CD8-positive, alpha-beta T cell (primary cell): ENCODE measurements at regions of chr5 and their contacts with region 1.

Region 1: DNA sequence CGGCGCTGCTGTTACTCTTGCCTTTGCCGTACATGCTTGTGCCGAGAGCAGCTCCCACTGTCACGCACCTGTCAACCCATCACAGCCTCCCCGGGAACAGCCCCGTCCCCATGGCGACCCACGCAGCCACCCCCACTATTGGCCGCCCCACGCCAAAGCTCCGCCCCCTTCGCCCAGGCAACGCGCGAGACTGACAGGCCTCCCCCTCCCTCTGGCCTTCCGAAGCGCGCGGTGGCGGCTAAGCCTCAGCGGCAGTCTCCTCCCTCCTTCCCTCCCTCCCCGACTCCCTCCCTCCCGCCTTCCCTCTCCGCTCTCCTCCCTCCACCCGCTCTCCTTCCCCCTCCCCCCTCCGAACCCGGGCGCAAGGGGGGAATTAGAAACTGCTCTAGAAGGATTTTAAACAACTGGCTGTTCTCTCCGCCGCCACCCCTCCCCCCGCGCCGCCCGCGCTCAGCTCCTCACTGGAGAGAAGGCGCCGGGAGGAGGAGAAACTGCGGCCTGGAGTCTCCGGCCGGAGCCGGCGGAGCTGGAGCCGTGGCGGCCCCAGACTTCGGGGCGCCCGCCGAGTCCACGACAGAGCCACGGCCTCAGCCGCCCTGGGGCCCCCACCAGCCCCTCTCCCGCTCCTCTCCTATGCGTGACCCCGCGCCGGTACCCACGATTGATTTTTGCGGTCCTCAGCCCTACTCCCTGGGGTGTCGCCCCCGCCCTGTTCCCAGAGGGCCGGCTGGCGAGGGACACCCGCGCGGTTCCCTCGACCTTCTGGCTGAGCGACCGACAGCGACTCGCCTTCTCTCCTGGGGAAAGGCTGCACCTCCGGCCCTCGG is at the start of gene SSBP2:
- DNase-seq: peak; percentile 99 to 100 (median 99)
- ATAC-seq: peak; percentile 90
- H3K4me3 ChIP-seq: peak within 1 kb of the TSS; percentile 75 to 76
- H3K4me3 Mint-ChIP-seq: peak within 1 kb of the TSS; percentile 97
- H3K27ac ChIP-seq: peak within 1 kb of the TSS; percentile 76 to 84
- H3K27ac Mint-ChIP-seq: peak within 1 kb of the TSS; percentile 94
- H3K4me1 ChIP-seq: peaks cover 17% of the 10 kb centered on the region
- H3K4me1 Mint-ChIP-seq: peaks cover 33% of the 10 kb centered on the region
- H3K27me3 ChIP-seq: no peaks in the 10 kb centered on the region
- H3K27me3 Mint-ChIP-seq: no peaks in the 10 kb centered on the region
- CTCF ChIP-seq: no peak
- total RNA-seq, gene SSBP2: 21.7 to 22.5 TPM

Region 2: GRCh38 chr5:81425569-81425968 is 325.7 kb before region 1 on chr5:
- CTCF ChIA-PET with region 1: no interaction called
- POLR2A ChIA-PET with region 1: interaction called, 5 read pairs
- intact Hi-C with region 1: loop called in 1 of 2 experiments (anchors 5 kb)
- DNase-seq: peak in 2 of 9 experiments; percentile 42 to 57
- ATAC-seq: peak; percentile 49
- H3K4me3 ChIP-seq: no peak overlapping the region
- H3K4me3 Mint-ChIP-seq: no peak overlapping the region
- H3K27ac ChIP-seq: no peak overlapping the region
- H3K27ac Mint-ChIP-seq: no peak overlapping the region
- H3K4me1 ChIP-seq: no peaks in the 10 kb centered on the region
- H3K4me1 Mint-ChIP-seq: peaks cover 7% of the 10 kb centered on the region
- H3K27me3 ChIP-seq: no peaks in the 10 kb centered on the region
- H3K27me3 Mint-ChIP-seq: no peaks in the 10 kb centered on the region
- CTCF ChIP-seq: peak; percentile 71

Region 3: GRCh38 chr5:81513982-81514381 is 237.2 kb before region 1 on chr5:
- CTCF ChIA-PET with region 1: interaction called, 3 read pairs
- POLR2A ChIA-PET with region 1: no interaction called
- intact Hi-C with region 1: loop called in 1 of 2 experiments (anchors 1 kb)
- DNase-seq: peak in 1 of 9 experiments; percentile 35
- ATAC-seq: peak; percentile 42
- H3K4me3 ChIP-seq: no peak overlapping the region
- H3K4me3 Mint-ChIP-seq: no peak overlapping the region
- H3K27ac ChIP-seq: no peak overlapping the region
- H3K27ac Mint-ChIP-seq: no peak overlapping the region
- H3K4me1 ChIP-seq: no peaks in the 10 kb centered on the region
- H3K4me1 Mint-ChIP-seq: no peaks in the 10 kb centered on the region
- H3K27me3 ChIP-seq: no peaks in the 10 kb centered on the region
- H3K27me3 Mint-ChIP-seq: no peaks in the 10 kb centered on the region
- CTCF ChIP-seq: peak; percentile 51

Region 4: GRCh38 chr5:81779125-81779915 is 28.1 kb after region 1 on chr5:
- CTCF ChIA-PET with region 1: no interaction called
- POLR2A ChIA-PET with region 1: interaction called, 32 read pairs
- intact Hi-C with region 1: loop called in 1 of 2 experiments (anchors 1 kb)
- DNase-seq: peak in 8 of 9 experiments; percentile 13 to 74 (median 42)
- ATAC-seq: peak; percentile 74
- H3K4me3 ChIP-seq: peak overlapping the region; percentile 47 to 55
- H3K4me3 Mint-ChIP-seq: peak overlapping the region; percentile 89
- H3K27ac ChIP-seq: peak overlapping the region; percentile 50 to 82
- H3K27ac Mint-ChIP-seq: peak overlapping the region; percentile 96
- H3K4me1 ChIP-seq: peaks cover 16% of the 10 kb centered on the region
- H3K4me1 Mint-ChIP-seq: peaks cover 24% of the 10 kb centered on the region
- H3K27me3 ChIP-seq: no peaks in the 10 kb centered on the region
- H3K27me3 Mint-ChIP-seq: no peaks in the 10 kb centered on the region
- CTCF ChIP-seq: no peak

Region 5: GRCh38 chr5:81851481-81852178 is 100.4 kb after region 1 on chr5:
- CTCF ChIA-PET with region 1: interaction called, 20 read pairs
- POLR2A ChIA-PET with region 1: interaction called, 142 read pairs
- intact Hi-C with region 1: loop called (anchors 1 kb)
- DNase-seq: peak; percentile 81 to 95 (median 90)
- ATAC-seq: peak; percentile 91
- H3K4me3 ChIP-seq: peak overlapping the region; percentile 63 to 68
- H3K4me3 Mint-ChIP-seq: peak overlapping the region; percentile 94
- H3K27ac ChIP-seq: peak overlapping the region; percentile 56 to 58
- H3K27ac Mint-ChIP-seq: peak overlapping the region; percentile 97
- H3K4me1 ChIP-seq: peaks cover 26% of the 10 kb centered on the region
- H3K4me1 Mint-ChIP-seq: peaks cover 51% of the 10 kb centered on the region
- H3K27me3 ChIP-seq: no peaks in the 10 kb centered on the region
- H3K27me3 Mint-ChIP-seq: no peaks in the 10 kb centered on the region
- CTCF ChIP-seq: no peak

Region 6: GRCh38 chr5:82068723-82069122 is 317.5 kb after region 1 on chr5:
- CTCF ChIA-PET with region 1: no interaction called
- POLR2A ChIA-PET with region 1: interaction called, 3 read pairs
- intact Hi-C with region 1: loop called in 1 of 2 experiments (anchors 5 kb)
- DNase-seq: peak in 2 of 9 experiments; percentile 15 to 51
- ATAC-seq: peak; percentile 49
- H3K4me3 ChIP-seq: peak overlapping the region in 1 of 2 experiments; percentile 28
- H3K4me3 Mint-ChIP-seq: peak overlapping the region; percentile 73
- H3K27ac ChIP-seq: no peak overlapping the region
- H3K27ac Mint-ChIP-seq: peak overlapping the region; percentile 24
- H3K4me1 ChIP-seq: peaks cover 5% of the 10 kb centered on the region
- H3K4me1 Mint-ChIP-seq: peaks cover 12% of the 10 kb centered on the region
- H3K27me3 ChIP-seq: no peaks in the 10 kb centered on the region
- H3K27me3 Mint-ChIP-seq: no peaks in the 10 kb centered on the region
- CTCF ChIP-seq: no peak

Region 7: GRCh38 chr5:82278095-82278918 is 527.1 kb after region 1 on chr5 and contains the start of gene RPS23:
- CTCF ChIA-PET with region 1: no interaction called
- POLR2A ChIA-PET with region 1: interaction called, 4 read pairs
- intact Hi-C with region 1: loop called (anchors 1 to 5 kb)
- DNase-seq: peak; percentile 73 to 94 (median 86)
- ATAC-seq: peak; percentile 95
- H3K4me3 ChIP-seq: peak within 1 kb of the TSS; percentile 63 to 94
- H3K4me3 Mint-ChIP-seq: peak within 1 kb of the TSS; percentile 97
- H3K27ac ChIP-seq: peak within 1 kb of the TSS; percentile 71 to 84
- H3K27ac Mint-ChIP-seq: peak within 1 kb of the TSS; percentile 96
- H3K4me1 ChIP-seq: peaks cover 18% of the 10 kb centered on the region
- H3K4me1 Mint-ChIP-seq: peaks cover 44% of the 10 kb centered on the region
- H3K27me3 ChIP-seq: no peaks in the 10 kb centered on the region
- H3K27me3 Mint-ChIP-seq: no peaks in the 10 kb centered on the region
- CTCF ChIP-seq: no peak
- total RNA-seq, gene RPS23: 3,866 to 4,021 TPM